Aorta (tissue), 5 donors: ENCODE measurements at regions of chr12 and their contacts with region 1.

Region 1: GRCh38 chr12:122471324-122472226 is 29.2 kb downstream of the ZCCHC8 start:
- DNase-seq: no peak
- ATAC-seq: peak; percentile 87
- H3K4me3 ChIP-seq: no peak overlapping the region
- H3K27ac ChIP-seq: peak overlapping the region; percentile 25 to 78
- H3K4me1 ChIP-seq: peaks cover 0 to 2% of the 10 kb centered on the region in 2 donors
- H3K27me3 ChIP-seq: no peaks in the 10 kb centered on the region

Region 2: DNA sequence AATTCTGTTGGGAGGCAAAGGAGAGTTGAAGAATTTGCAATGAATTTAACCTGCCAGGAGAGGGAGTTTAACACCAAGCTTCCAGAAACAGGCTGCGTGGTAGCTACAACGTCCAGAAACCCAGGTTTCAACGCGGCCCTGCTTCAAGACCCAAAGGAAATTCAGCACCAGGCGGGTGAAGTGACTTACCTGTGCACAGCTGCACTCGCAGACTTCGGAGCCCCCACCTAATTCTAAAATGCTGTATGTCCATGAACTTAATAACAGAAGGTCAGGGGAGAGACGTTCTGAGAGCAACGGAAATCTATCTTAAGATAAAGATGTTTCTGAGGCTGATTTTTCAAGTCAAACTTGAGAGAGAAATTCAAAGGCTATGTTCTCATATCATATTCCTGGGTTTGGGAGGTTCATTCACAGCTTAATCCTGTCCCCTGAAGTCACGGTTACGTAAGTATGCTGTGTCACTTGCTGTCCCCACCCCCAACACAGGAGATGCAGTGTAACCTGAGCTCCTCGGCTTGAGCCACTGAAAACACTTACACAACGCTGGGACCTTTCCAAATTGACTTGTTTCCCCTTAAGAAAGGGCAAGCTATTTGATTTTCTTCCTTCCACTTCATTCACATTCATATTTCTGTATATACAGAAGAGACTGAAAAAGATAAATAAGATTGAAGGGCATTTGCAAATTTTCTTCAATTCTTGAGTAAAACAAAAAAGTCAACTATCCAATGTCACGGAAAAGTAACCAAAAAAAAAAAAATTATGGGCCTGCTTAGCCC is 71.8 kb before region 1 on chr12:
- intact Hi-C with region 1: loop called (anchors 1 to 5 kb)
- DNase-seq: peak; percentile 75 to 82
- ATAC-seq: peak; percentile 91
- H3K4me3 ChIP-seq: no peak overlapping the region
- H3K27ac ChIP-seq: peak overlapping the region; percentile 98 to 100
- H3K4me1 ChIP-seq: no peaks in the 10 kb centered on the region
- H3K27me3 ChIP-seq: no peaks in the 10 kb centered on the region

Region 3: GRCh38 chr12:122421821-122422729 is 49.5 kb before region 1 on chr12 and contains the start of gene CLIP1:
- intact Hi-C with region 1: loop called in 1 of 2 experiments (anchors 5 kb)
- DNase-seq: peak; percentile 69 to 88
- ATAC-seq: peak; percentile 89
- H3K4me3 ChIP-seq: peak within 1 kb of the TSS; percentile 89 to 99
- H3K27ac ChIP-seq: peak within 1 kb of the TSS; percentile 97 to 98
- H3K4me1 ChIP-seq: no peaks in the 10 kb centered on the region
- H3K27me3 ChIP-seq: no peaks in the 10 kb centered on the region
- total RNA-seq, gene CLIP1: 125 to 182 TPM

Region 4: GRCh38 chr12:122545855-122546254 is 74.3 kb after region 1 on chr12:
- intact Hi-C with region 1: no loop called
- DNase-seq: no peak
- ATAC-seq: no peak
- H3K4me3 ChIP-seq: no peak overlapping the region
- H3K27ac ChIP-seq: no peak overlapping the region
- H3K4me1 ChIP-seq: peaks cover 0 to 1% of the 10 kb centered on the region in 2 donors
- H3K27me3 ChIP-seq: no peaks in the 10 kb centered on the region